ENCODE measurements at regions of chrX and their contacts with region 1.

Region 1: GRCh38 chrX:49915361-49916222 is 6.8 kb upstream of the CLCN5 start:
- DNase-seq: peak; percentile 26
- ATAC-seq: peak; percentile 64 to 70

Region 2: DNA sequence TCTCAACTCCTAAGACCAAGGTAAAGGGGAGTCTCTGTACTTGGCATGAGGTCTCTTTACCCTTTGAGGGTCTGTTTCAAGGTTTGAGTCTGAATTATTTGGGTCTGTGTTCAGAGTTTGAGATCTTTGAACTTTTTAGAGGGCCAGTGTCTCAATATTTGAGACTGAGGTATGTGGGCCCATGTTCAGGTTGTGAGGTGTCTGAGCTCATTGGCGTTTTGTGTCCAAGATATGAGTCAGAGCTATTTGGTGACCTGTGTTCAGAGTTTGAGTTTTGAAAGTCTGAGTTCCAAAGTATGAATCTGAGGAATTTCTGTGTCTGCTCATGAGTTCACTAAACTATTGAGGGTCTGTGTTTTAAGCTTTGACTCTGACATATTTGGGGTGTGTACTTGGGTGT is 123.2 kb before region 1 on chrX:
- intact Hi-C with region 1: no loop called
- DNase-seq: no peak
- ATAC-seq: no peak

Region 3: DNA sequence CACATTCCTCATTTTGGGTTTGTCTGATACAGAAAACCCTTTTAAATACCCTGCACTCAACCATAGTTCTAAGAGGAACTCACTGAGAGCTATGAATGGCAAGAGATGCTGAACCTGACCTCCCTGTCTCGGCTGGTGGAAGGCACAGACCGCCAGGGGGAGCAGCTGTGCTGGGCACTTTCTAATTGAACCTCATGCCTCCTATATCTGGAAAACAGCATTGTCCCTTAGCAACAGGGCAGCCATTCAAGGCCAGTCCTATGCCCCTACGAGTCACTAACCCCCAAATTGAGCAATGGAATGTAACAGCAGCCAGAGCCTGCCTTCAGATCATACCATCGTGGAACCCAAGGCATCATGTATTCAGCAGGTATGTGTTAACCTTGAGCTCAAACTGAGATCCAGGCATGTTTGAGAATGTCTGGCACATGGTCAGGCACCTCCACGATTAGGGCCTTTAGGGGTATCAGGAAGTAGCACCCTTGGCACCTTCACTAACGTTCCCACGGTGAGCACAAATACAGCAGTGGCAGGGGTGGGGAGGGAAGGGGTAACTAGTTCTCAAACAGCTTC is 31.2 kb before region 1 on chrX:
- intact Hi-C with region 1: loop called in 1 of 2 experiments (anchors 5 kb)
- DNase-seq: peak; percentile 53
- ATAC-seq: peak; percentile 29 to 37

Region 4: DNA sequence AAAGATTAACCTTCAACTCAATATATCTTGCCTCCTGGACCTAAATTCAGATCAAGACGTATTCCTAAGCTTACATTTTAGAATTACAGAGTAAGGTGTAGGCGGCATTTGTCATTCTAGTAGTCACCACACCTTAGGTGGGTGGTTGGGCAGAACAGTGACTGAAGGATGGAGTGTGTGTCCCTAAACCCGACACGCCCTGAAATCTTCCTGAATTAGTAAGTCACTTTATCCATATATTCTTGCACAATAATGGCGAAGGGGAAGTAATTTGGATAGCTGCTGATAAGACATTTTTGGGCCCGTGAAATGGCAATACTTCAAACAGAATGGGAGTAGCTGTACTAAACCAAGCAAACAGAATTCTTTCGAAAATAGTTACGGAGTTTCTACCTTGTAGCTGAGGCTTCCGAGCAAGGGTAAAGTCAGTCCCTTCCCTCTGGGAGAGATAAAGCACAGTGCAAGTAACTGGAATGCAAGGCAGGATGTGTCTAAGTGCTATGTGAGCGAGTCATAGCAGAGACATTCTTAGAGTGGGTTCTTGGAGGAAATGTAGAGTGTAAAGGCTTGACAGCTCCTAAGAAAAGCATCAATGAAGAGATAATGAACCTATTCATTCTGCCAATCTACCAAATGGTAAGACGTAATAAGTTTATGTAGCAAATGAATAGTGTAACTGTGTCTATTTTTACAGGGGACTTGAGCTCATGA is 79.6 kb after region 1 on chrX:
- intact Hi-C with region 1: no loop called
- DNase-seq: no peak
- ATAC-seq: peak in 1 of 2 donors; percentile 69

Region 5: GRCh38 chrX:50081282-50081889 is 165.8 kb after region 1 on chrX:
- intact Hi-C with region 1: loop called in 1 of 2 experiments (anchors 5 kb)
- DNase-seq: peak; percentile 22
- ATAC-seq: no peak

Region 6: DNA sequence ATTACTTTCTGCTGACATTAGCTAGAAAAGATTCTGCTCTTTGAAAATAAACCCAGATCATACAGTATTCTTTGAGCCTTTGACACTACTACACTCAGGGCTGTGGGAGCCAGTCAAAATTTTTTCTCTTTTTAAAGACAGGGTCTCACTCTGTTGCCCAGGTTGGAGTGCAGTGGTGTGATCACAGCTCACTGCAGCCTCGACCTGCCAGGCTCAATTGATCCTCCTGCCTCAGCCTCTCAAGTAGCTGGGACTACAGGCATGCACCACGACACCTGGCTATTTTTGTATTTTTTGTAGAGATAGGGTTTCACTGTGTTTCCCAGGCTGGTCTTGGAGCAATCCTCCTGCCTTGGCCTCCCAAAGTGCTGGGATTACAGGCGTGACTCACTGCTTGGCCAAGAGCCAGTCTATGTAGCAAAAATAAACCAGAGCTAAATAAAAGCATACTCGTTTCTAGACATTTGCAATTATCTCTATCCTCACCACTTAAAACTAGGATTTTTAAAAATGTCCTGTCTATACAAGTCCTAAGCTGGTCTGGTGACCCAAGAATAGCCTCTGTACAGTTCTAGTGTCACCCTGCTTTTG is 242.0 kb after region 1 on chrX:
- intact Hi-C with region 1: no loop called
- DNase-seq: no peak
- ATAC-seq: no peak

Region 7: GRCh38 chrX:50579955-50580354 is 664.4 kb after region 1 on chrX:
- intact Hi-C with region 1: loop called in 1 of 2 experiments (anchors 5 kb)
- DNase-seq: no peak
- ATAC-seq: peak; percentile 61 to 63